Right ventricle myocardium inferior (tissue), 1 donor: ENCODE measurements at regions of chr10 and their contacts with region 1.

Region 1: GRCh38 chr10:48981310-48981907 is 41.8 kb upstream of the LRRC18 start:
- DNase-seq: no peak
- ATAC-seq: peak; percentile 86

Region 2: GRCh38 chr10:49001870-49002672 is 20.7 kb after region 1 on chr10:
- intact Hi-C with region 1: loop called (anchors 2 kb)
- DNase-seq: no peak
- ATAC-seq: peak; percentile 90

Region 3: GRCh38 chr10:49080071-49080470 is 98.7 kb after region 1 on chr10:
- intact Hi-C with region 1: no loop called
- DNase-seq: no peak
- ATAC-seq: peak; percentile 59

Region 4: GRCh38 chr10:49164559-49165188 is 183.3 kb after region 1 on chr10:
- intact Hi-C with region 1: loop called (anchors 2 kb)
- DNase-seq: no peak
- ATAC-seq: peak; percentile 49

Region 5: DNA sequence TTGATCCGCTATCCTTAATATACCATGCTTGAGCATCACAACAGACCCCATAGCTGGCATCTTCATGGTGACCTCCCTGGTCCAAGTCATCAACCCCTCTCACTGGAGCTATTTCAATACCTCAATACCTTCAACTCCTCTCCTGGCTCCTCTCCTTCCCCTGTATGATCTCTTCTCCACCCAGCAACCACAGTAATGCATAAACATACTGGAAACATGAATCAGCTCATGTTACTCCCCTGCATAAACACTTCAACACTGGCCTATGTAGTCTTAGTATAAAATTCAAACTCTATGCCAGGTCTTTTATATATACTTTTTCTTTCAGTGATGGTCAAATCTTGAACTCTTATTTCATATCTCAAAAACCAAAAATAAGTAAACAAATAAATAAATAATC is 238.6 kb after region 1 on chr10:
- intact Hi-C with region 1: no loop called
- DNase-seq: no peak
- ATAC-seq: no peak

Region 6: GRCh38 chr10:49398000-49398861 is 416.8 kb after region 1 on chr10:
- intact Hi-C with region 1: no loop called
- DNase-seq: peak; percentile 75
- ATAC-seq: peak; percentile 90

Region 7: DNA sequence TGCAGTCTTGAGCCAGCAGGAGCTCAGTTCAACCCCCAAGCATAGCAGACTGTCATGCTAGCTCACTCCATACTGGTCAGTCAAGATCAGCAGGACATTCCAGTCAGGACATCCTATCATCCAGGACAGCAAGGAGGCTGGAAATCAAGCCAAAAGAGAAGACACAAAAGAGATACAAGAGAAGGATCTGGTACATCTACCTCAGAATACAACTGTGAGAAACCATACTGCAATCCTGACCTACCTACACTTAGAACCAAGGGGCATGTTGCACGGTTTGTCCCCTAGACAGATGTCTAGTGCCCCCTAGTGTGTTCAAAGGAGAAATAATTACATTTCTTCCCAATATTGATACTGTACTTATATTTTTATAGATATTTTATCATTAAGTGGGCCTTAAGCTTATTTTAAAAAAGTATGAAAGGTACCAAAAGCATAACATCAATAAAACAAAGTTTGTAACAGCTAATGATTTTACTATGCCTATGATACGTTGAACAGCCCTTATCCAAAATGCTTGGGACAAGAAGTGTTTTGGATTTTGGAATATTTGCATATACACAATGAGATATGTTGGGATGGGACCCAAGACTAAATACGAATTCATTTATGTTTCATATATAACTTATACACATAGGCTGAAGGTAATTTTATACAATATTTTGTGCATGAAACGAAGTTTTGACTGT is 530.9 kb after region 1 on chr10:
- intact Hi-C with region 1: loop called (anchors 5 kb)
- DNase-seq: no peak
- ATAC-seq: peak; percentile 44